ENCODE measurements at regions of chr3 and their contacts with region 1.

Region 1: GRCh38 chr3:113002679-113003078 is 11.9 kb downstream of the GTPBP8 start:
- DNase-seq: peak; percentile 90
- H3K4me3 Mint-ChIP-seq: peak overlapping the region; percentile 42
- H3K27ac Mint-ChIP-seq: peak overlapping the region; percentile 95
- H3K4me1 Mint-ChIP-seq: peaks cover 86% of the 10 kb centered on the region
- H3K27me3 Mint-ChIP-seq: no peaks in the 10 kb centered on the region

Region 2: DNA sequence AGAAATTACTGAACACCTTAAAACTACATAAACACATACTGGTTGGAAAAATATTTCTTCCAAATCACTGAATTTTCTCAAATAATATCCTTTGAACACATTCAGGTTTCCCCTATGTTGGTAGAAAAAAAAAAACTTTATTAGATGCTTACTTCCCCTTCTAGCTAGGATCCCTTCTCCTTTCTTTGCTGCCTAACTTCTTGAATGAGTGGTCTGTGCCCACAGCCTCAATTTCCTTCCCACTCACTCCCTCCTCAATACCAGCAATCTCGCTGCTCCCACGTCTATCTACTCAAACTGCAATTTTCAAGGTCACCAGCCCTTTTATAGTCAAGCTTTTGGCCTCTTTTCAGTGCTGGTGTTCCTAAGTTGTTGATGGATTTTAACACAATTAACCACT is 36.0 kb before region 1 on chr3:
- CTCF ChIA-PET with region 1: no interaction called
- intact Hi-C with region 1: no loop called
- DNase-seq: no peak
- H3K4me3 Mint-ChIP-seq: peak overlapping the region; percentile 13
- H3K27ac Mint-ChIP-seq: no peak overlapping the region
- H3K4me1 Mint-ChIP-seq: peaks cover 50% of the 10 kb centered on the region
- H3K27me3 Mint-ChIP-seq: no peaks in the 10 kb centered on the region

Region 3: DNA sequence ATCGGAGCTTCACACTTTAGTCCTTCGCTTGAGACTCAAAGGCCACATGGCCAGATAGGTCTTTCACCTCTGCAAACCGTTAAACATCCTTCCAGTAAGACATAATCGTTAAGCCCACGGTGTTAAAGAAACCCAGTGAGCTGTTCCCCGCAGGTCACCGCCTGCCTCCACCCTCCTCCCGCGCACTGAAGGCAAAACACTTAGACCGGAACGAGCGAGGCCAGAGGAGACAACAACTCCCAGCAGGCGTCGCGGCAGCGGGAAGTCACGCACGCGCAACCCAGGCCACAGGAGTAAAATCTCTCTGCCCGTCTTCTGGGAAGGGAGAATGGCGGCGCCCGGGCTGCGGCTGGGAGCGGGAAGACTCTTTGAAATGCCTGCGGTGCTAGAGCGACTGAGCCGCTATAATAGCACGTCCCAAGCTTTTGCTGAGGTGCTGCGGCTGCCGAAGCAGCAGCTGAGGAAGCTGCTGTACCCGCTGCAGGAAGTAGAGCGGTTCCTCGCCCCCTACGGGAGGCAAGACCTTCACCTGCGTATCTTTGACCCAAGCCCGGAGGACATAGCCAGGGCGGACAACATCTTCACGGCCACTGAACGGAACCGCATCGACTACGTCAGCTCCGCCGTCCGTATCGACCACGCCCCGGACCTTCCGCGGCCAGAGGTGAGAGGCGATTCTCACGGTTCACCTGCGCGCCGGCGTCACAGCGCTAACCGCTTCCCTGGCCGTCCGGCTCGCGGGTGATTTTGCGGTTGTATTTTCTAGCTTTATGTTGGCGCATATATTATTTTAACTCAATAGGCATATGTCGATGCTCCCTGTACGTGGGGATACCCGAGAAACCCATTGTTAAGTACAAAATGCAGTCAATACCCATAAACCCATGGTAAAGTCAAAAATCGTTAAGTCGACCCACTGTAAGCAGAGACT is 11.7 kb before region 1 on chr3 and contains the start of gene GTPBP8:
- CTCF ChIA-PET with region 1: interaction called, 8 read pairs
- intact Hi-C with region 1: loop called (anchors 1 kb)
- DNase-seq: peak; percentile 94
- H3K4me3 Mint-ChIP-seq: peak within 1 kb of the TSS; percentile 94
- H3K27ac Mint-ChIP-seq: peak within 1 kb of the TSS; percentile 96
- H3K4me1 Mint-ChIP-seq: peaks cover 68% of the 10 kb centered on the region
- H3K27me3 Mint-ChIP-seq: no peaks in the 10 kb centered on the region
- total RNA-seq, gene GTPBP8: 62.8 to 68.9 TPM